ENCODE measurements at regions of chr4 and their contacts with region 1.

Region 1: GRCh38 chr4:165493359-165493758 is 114.6 kb downstream of the CPE start:
- DNase-seq: peak; percentile 88
- ATAC-seq: peak; percentile 98
- H3K4me3 Mint-ChIP-seq: peak overlapping the region; percentile 55
- H3K27ac Mint-ChIP-seq: no peak overlapping the region
- H3K4me1 Mint-ChIP-seq: peaks cover 24% of the 10 kb centered on the region
- H3K27me3 Mint-ChIP-seq: peaks cover 3% of the 10 kb centered on the region; the same call in 1 of the 2 replicates
- CTCF ChIP-seq: peak; percentile 53; the same call in 1 of the 2 replicates

Region 2: GRCh38 chr4:165355900-165356300 is 137.5 kb before region 1 on chr4:
- CTCF ChIA-PET with region 1: interaction called, 18 read pairs
- POLR2A ChIA-PET with region 1: no interaction called
- DNase-seq: peak; percentile 63
- ATAC-seq: peak; percentile 87
- H3K4me3 Mint-ChIP-seq: no peak overlapping the region
- H3K27ac Mint-ChIP-seq: no peak overlapping the region
- H3K4me1 Mint-ChIP-seq: 0 out of 2 replicates have a peak, but pooled peaks cover 2% of the 10 kb centered on the region
- H3K27me3 Mint-ChIP-seq: no peaks in the 10 kb centered on the region
- CTCF ChIP-seq: no peak

Region 3: DNA sequence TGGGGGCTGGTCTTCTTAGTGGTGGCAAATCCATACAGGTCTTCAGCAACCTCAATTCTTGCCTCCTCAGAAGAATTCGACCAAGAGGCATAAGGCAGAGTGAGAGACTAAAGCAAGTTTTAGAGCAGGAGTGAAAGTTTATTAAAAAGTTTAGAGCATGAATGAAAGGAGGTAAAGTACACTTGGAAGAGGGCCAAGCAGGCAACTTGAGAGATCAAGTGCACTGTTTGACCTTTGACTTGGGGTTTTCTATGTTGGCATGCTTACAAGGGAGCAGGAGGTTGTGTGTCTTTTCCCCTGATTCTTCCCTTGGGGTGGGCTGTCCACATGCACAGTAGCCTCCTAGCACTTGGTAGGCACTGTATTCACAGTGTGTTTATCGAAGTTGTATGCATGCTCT is 23.4 kb before region 1 on chr4:
- CTCF ChIA-PET with region 1: no interaction called
- POLR2A ChIA-PET with region 1: no interaction called
- DNase-seq: no peak
- ATAC-seq: no peak
- H3K4me3 Mint-ChIP-seq: no peak overlapping the region
- H3K27ac Mint-ChIP-seq: no peak overlapping the region
- H3K4me1 Mint-ChIP-seq: no peaks in the 10 kb centered on the region
- H3K27me3 Mint-ChIP-seq: peaks cover 4% of the 10 kb centered on the region; the same call in 1 of the 2 replicates
- CTCF ChIP-seq: no peak

Region 4: DNA sequence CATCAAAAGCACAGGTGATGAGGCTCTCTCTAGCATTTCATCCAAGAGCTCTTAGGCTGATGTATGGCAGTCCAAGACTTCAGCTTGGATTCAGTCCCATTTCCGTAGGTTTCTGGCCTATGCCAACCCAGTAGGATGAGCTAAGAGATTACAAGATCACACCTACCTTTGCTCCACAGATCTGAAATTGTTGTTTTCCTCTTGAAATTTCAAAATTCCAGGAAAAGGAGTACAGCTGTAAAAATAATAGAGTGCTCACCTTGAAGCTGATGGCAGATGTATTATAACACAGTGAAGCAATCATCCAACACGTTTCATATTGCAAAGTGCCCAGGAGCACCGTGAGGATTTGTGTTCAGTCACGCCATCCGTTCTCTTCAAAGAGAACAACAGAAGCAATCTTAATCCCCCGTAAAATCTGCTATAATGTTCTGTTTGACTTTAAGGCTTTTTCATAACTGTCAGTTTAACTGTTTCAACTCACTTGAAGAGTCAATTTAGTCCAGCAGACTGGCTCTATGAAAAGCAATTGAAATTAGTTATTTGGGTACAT is 23.0 kb after region 1 on chr4:
- CTCF ChIA-PET with region 1: interaction called, 10 read pairs
- POLR2A ChIA-PET with region 1: no interaction called
- DNase-seq: no peak
- ATAC-seq: no peak
- H3K4me3 Mint-ChIP-seq: no peak overlapping the region
- H3K27ac Mint-ChIP-seq: no peak overlapping the region
- H3K4me1 Mint-ChIP-seq: no peaks in the 10 kb centered on the region
- H3K27me3 Mint-ChIP-seq: no peaks in the 10 kb centered on the region
- CTCF ChIP-seq: no peak

Region 5: DNA sequence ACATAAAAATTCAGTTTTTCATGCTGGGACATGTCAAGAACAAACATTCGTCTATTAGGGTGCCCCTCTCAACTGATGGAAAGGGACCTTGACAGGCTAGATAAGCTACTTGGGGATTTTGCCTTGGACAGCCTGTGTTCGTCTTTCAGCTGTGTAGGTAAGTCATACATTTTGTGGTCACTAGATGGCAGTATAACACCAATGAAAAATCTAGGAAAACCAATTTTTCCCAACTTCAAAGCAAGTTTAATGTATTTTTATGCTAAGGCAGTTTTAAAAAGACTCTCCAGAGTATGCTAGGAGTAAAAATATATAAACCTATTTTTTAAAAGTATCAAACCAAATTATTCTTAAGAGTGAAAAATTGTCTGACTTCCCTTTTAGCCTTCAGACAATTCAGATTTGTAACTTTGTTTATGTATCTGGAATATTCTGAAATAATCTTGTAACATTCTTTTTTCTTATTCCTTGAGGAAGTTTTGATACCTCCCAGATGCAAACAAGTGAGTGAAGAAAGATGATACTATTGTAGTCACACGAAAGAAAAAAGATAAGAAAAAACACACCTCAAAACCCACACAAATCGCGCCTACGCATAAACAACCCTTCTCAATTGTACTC is 43.8 kb after region 1 on chr4:
- CTCF ChIA-PET with region 1: interaction called, 46 read pairs
- POLR2A ChIA-PET with region 1: no interaction called
- DNase-seq: no peak
- ATAC-seq: peak; percentile 79
- H3K4me3 Mint-ChIP-seq: no peak overlapping the region
- H3K27ac Mint-ChIP-seq: no peak overlapping the region
- H3K4me1 Mint-ChIP-seq: peaks cover 3% of the 10 kb centered on the region; the same call in 1 of the 2 replicates
- H3K27me3 Mint-ChIP-seq: no peaks in the 10 kb centered on the region
- CTCF ChIP-seq: peak; percentile 55; the same call in 1 of the 2 replicates

Region 6: GRCh38 chr4:166091912-166092510 is 598.7 kb after region 1 on chr4:
- CTCF ChIA-PET with region 1: interaction called, 28 read pairs
- POLR2A ChIA-PET with region 1: no interaction called
- DNase-seq: no peak
- ATAC-seq: 0 out of 2 replicates have a peak, but pooled peaks have one; percentile 32
- H3K4me3 Mint-ChIP-seq: no peak overlapping the region
- H3K27ac Mint-ChIP-seq: no peak overlapping the region
- H3K4me1 Mint-ChIP-seq: peaks cover 12% of the 10 kb centered on the region
- H3K27me3 Mint-ChIP-seq: no peaks in the 10 kb centered on the region
- CTCF ChIP-seq: peak; percentile 55